ENCODE measurements at regions of chr3 and their contacts with region 1.

Region 1: GRCh38 chr3:52056968-52057805 is 816 bp upstream of the DUSP7 start:
- DNase-seq: peak; percentile 100
- ATAC-seq: peak; percentile 82
- H3K4me3 Mint-ChIP-seq: peak overlapping the region; percentile 83
- H3K27ac Mint-ChIP-seq: peak overlapping the region; percentile 95
- H3K4me1 Mint-ChIP-seq: peaks cover 32% of the 10 kb centered on the region
- H3K27me3 Mint-ChIP-seq: no peaks in the 10 kb centered on the region
- CTCF ChIP-seq: no peak

Region 2: DNA sequence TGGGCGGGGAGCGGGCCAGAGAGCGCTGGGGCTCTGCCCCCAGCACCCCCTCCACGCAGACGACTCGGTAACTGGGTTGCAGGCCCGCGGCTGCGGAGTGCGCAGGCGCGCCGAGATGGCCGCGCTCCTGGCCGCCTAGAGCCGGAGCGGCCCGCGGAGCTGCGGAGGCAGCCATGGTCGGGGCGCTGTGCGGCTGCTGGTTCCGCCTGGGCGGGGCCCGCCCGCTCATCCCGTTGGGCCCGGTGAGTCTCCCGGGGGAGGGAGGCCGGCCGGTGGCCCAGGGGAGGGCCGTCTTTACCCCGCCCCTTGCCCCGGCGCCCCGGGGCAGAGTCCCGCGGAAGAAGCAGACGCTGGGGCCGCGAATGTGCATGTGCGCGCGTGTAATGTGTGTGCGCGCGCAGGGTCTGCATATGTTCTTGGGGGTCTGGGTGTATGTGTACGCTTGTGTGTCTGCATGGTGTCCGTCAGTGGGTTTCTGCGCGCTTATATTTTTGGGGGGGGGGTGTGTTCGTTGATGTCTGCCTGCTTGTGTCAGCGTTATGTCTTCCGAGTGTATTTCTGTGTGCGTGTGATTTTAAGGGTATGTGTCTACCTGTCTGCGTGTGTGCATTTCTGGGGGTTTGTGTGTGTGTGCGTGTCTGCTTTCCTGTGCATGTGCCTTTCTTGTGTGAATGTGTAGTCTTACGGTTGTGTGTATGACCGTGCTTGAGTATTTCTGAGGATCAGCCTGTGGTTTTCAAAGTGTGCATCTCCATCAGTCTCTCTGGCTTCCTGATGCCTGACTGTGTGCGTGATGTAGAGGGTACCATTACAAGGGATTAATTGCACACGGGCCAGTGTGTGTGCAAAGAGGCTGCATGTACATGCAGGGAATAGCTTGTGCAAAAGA is 82.0 kb before region 1 on chr3 and contains the start of gene ABHD14A:
- CTCF ChIA-PET with region 1: interaction called, 10 read pairs
- POLR2A ChIA-PET with region 1: interaction called, 11 read pairs
- intact Hi-C with region 1: no loop called
- DNase-seq: peak; percentile 67
- ATAC-seq: peak; percentile 77
- H3K4me3 Mint-ChIP-seq: peak within 1 kb of the TSS; percentile 77
- H3K27ac Mint-ChIP-seq: peak within 1 kb of the TSS; percentile 97
- H3K4me1 Mint-ChIP-seq: peaks cover 31% of the 10 kb centered on the region
- H3K27me3 Mint-ChIP-seq: no peaks in the 10 kb centered on the region
- CTCF ChIP-seq: no peak
- total RNA-seq, gene ABHD14A: 8.9 to 9.5 TPM

Region 3: DNA sequence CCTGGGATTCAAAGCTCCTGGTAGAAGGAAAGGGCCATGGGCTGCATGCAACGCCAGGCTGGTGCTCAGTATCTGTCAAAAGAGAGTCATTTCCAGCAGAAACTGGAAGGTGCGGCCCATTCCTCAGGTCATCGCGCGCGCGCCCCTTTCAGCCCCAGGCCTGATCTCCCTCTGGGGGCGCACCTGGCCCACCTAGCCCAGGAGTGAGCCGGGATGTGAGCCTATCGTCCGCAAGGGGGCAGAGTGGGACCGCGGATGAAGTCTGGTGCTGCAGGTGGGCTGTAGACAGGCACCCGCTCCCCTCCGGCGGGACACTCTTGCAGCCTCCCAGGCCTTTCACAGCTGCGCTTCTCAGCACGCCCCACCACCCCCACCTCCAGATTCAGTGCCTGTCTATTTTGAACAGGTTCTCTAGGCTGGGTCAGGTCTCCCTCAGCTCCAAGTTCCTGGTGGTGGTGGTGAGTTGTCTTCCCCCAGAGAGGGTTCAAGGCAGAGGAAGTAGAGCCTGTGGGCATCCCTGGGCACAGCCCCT is 55.7 kb before region 1 on chr3:
- CTCF ChIA-PET with region 1: interaction called, 74 read pairs
- POLR2A ChIA-PET with region 1: interaction called, 5 read pairs
- intact Hi-C with region 1: loop called (anchors 5 kb)
- DNase-seq: peak; percentile 95
- ATAC-seq: peak; percentile 99
- H3K4me3 Mint-ChIP-seq: no peak overlapping the region
- H3K27ac Mint-ChIP-seq: no peak overlapping the region
- H3K4me1 Mint-ChIP-seq: peaks cover 13% of the 10 kb centered on the region
- H3K27me3 Mint-ChIP-seq: no peaks in the 10 kb centered on the region
- CTCF ChIP-seq: peak; percentile 94

Region 4: DNA sequence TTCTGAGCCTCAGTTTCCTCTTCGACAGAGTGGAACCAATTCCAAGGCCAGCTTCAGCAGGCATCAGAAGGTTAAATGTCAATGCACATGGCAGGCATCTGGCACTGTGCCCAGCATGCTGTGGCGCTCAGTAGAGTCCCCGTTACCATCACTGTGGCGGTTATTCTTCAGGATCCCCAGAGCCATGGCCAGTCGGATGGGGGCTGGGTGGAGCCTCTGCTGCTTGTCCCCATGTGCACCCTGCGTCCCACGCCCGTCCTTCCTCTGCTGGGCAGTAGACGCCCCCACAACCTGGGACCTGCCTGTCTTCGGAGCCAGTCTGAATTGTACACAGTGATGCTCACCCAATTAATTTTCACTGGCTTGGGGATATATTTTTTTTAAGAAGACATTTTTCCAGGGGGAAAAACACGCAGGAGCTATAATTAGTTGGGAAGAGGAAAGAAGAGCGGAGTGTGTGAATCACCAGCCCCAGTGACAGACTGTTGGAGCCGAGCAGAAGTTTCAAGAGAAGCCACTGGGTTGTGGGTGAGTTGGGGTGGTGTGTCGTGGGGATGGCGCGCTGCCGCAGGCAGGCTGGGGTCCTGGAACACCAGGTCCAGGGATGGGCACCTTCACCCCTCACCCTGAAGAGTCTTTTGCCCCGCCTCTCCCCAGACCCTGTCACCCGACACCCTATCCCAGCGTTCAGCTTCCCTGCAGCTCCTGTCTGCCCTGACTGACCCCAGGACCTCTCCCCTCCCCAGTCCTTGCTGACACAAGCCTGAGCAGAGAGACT is 34.7 kb before region 1 on chr3:
- CTCF ChIA-PET with region 1: no interaction called
- POLR2A ChIA-PET with region 1: no interaction called
- intact Hi-C with region 1: no loop called
- DNase-seq: no peak
- ATAC-seq: no peak
- H3K4me3 Mint-ChIP-seq: no peak overlapping the region
- H3K27ac Mint-ChIP-seq: no peak overlapping the region
- H3K4me1 Mint-ChIP-seq: no peaks in the 10 kb centered on the region
- H3K27me3 Mint-ChIP-seq: no peaks in the 10 kb centered on the region
- CTCF ChIP-seq: no peak

Region 5: DNA sequence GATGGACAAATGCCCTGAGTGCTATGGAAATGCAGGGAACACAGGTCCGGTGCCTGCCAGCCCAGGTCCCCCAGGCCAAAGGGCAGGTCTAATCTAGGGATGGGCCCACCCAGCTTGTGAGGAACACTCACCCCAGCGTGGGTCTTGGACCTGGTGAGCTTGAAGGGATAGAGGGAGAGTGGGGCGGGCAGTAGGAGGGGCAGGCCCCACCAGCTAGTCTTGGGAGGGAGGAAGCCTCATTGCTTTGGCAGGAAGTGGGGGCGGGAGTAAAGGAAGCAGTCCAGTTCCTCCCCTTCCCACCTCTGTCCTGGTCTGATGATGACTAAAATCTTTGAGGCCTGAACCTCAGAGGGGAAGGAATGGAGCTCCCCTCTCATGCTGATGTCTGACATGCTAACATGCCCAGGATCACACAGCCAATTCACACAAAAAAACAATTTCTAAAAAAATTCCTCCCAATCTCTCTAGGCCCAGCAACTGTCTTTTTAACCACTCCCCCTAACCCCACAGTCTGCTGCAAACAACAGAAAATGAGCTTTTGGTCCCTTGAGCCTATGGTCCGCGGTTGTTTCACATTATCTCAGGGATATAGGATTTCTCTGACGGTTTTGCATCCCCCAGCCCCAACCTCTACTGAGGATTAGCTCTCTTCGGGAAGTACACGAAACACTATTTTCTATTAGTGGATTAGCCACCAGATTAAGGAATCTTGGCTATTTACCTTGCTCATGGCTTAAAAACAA is 29.9 kb after region 1 on chr3:
- CTCF ChIA-PET with region 1: interaction called, 5 read pairs
- POLR2A ChIA-PET with region 1: interaction called, 10 read pairs
- intact Hi-C with region 1: no loop called
- DNase-seq: peak; percentile 19
- ATAC-seq: no peak
- H3K4me3 Mint-ChIP-seq: no peak overlapping the region
- H3K27ac Mint-ChIP-seq: peak overlapping the region; percentile 75
- H3K4me1 Mint-ChIP-seq: peaks cover 28% of the 10 kb centered on the region
- H3K27me3 Mint-ChIP-seq: no peaks in the 10 kb centered on the region
- CTCF ChIP-seq: no peak

Region 6: GRCh38 chr3:52144034-52144795 is 87.0 kb after region 1 on chr3:
- CTCF ChIA-PET with region 1: interaction called, 14 read pairs
- POLR2A ChIA-PET with region 1: interaction called, 4 read pairs
- intact Hi-C with region 1: no loop called
- DNase-seq: peak; percentile 93
- ATAC-seq: peak; percentile 100
- H3K4me3 Mint-ChIP-seq: no peak overlapping the region
- H3K27ac Mint-ChIP-seq: no peak overlapping the region
- H3K4me1 Mint-ChIP-seq: peaks cover 7% of the 10 kb centered on the region
- H3K27me3 Mint-ChIP-seq: no peaks in the 10 kb centered on the region
- CTCF ChIP-seq: peak; percentile 88